Endothelial cell of umbilical vein (primary cell): ENCODE measurements at regions of chr16 and their contacts with region 1.

Region 1: DNA sequence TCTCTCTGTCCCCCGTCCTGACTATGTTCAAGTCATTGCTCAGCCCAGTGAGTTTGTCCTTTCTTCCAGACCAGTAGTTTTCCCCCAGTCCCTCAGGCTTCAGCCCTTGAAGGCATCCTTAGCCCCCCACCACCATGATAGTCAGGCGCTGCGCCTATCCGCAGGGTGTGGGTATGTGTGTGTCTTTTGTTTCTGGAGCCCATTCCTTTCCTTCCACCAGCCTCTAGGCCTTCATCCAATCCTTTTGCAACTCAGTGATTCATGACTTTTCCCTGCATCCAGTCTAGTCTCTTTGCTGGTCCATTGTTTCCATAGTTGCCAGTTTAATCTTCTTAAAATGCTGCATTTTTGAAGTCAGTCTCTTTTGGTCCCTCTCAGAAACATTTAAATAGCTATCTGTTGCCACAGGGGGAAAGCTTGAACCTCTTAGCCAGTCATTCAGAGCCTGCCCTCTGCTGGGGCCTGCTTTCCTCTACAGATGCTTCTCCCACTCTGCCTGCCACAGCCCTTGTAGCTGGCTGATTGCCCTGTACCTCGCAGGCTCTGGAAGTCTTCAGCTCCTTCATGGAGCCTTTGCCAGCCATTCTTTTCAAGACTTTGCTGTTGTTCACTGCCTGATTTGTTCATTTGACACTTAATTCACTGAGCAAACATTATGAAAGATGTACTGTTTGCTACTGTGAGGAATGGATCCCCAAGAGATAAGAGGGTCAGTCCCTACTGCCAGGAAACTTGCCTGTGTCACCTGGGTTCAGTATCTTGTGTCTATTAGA is 55.9 kb upstream of the ADCY7 start:
- DNase-seq: peak; percentile 86
- H3K4me3 ChIP-seq: no peak overlapping the region
- H3K27ac ChIP-seq: no peak overlapping the region
- H3K4me1 ChIP-seq: peaks cover 22% of the 10 kb centered on the region
- H3K27me3 ChIP-seq: no peaks in the 10 kb centered on the region
- CTCF ChIP-seq: peak; percentile 71 to 80
- POLR2A ChIP-seq: no peak

Region 2: GRCh38 chr16:50024684-50025536 is 185.5 kb before region 1 on chr16 and contains the start of gene CNEP1R1:
- CTCF ChIA-PET with region 1: interaction called, 132 read pairs
- POLR2A ChIA-PET with region 1: interaction called, 3 read pairs
- dilution Hi-C with region 1: no loop called
- intact Hi-C with region 1: loop called (anchors 1 kb)
- DNase-seq: peak; percentile 98
- H3K4me3 ChIP-seq: peak within 1 kb of the TSS; percentile 86 to 94 (median 93)
- H3K27ac ChIP-seq: peak within 1 kb of the TSS; percentile 8
- H3K4me1 ChIP-seq: peaks cover 13% of the 10 kb centered on the region
- H3K27me3 ChIP-seq: peaks cover 2 to 6% of the 10 kb centered on the region in 2 experiments
- CTCF ChIP-seq: peak; percentile 99 to 100
- POLR2A ChIP-seq: peak; percentile 63
- total RNA-seq, gene CNEP1R1: 21.7 and 23.2 TPM in 2 replicates

Region 3: GRCh38 chr16:50079397-50080140 is 130.9 kb before region 1 on chr16:
- CTCF ChIA-PET with region 1: interaction called, 17 read pairs
- POLR2A ChIA-PET with region 1: no interaction called
- dilution Hi-C with region 1: no loop called
- intact Hi-C with region 1: no loop called
- DNase-seq: no peak
- H3K4me3 ChIP-seq: no peak overlapping the region
- H3K27ac ChIP-seq: no peak overlapping the region
- H3K4me1 ChIP-seq: peaks cover 7% of the 10 kb centered on the region
- H3K27me3 ChIP-seq: no peaks in the 10 kb centered on the region
- CTCF ChIP-seq: no peak
- POLR2A ChIP-seq: no peak

Region 4: GRCh38 chr16:50152807-50153452 is 57.5 kb before region 1 on chr16 and contains the start of gene TENT4B:
- CTCF ChIA-PET with region 1: interaction called, 55 read pairs
- POLR2A ChIA-PET with region 1: interaction called, 3 read pairs
- dilution Hi-C with region 1: no loop called
- intact Hi-C with region 1: loop called (anchors 1 kb)
- DNase-seq: peak; percentile 87
- H3K4me3 ChIP-seq: peak within 1 kb of the TSS; percentile 83 to 93 (median 83)
- H3K27ac ChIP-seq: peak within 1 kb of the TSS; percentile 89
- H3K4me1 ChIP-seq: peaks cover 17% of the 10 kb centered on the region
- H3K27me3 ChIP-seq: no peaks in the 10 kb centered on the region
- CTCF ChIP-seq: no peak
- POLR2A ChIP-seq: peak; percentile 79
- total RNA-seq, gene TENT4B: 13.1 TPM in 2 replicates

Region 5: DNA sequence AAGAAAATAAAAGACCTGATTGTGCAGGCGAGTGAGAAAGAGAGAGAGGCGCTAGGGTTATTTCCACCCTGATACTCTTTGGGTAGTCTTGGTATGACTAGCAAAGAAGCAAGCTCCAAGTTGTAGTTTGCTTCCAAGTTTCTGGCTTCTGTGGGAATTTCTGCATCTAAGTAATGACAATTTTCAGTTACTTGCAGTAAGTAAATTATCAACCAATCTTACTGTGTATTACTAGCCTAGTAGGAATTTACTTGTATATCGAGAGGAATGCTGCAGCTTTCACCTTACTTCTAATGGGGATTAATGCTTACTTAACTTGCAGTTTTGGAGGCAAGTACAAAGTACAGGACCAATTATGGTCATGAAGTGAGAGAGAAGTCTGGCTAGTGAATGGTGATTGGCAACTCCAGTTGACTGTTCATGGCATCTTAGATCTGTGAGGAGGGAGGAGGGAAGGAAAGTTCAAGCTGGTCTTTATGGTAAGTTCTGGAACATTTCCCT is 25.4 kb before region 1 on chr16:
- CTCF ChIA-PET with region 1: interaction called, 32 read pairs
- POLR2A ChIA-PET with region 1: interaction called, 7 read pairs
- dilution Hi-C with region 1: no loop called
- intact Hi-C with region 1: no loop called
- DNase-seq: peak; percentile 60
- H3K4me3 ChIP-seq: no peak overlapping the region
- H3K27ac ChIP-seq: no peak overlapping the region
- H3K4me1 ChIP-seq: peaks cover 16% of the 10 kb centered on the region
- H3K27me3 ChIP-seq: no peaks in the 10 kb centered on the region
- CTCF ChIP-seq: no peak
- POLR2A ChIP-seq: no peak

Region 6: GRCh38 chr16:50509521-50510341 is 299.3 kb after region 1 on chr16:
- CTCF ChIA-PET with region 1: interaction called, 3 read pairs
- POLR2A ChIA-PET with region 1: no interaction called
- dilution Hi-C with region 1: no loop called
- intact Hi-C with region 1: loop called (anchors 1 kb)
- DNase-seq: peak; percentile 42
- H3K4me3 ChIP-seq: no peak overlapping the region
- H3K27ac ChIP-seq: no peak overlapping the region
- H3K4me1 ChIP-seq: no peaks in the 10 kb centered on the region
- H3K27me3 ChIP-seq: no peaks in the 10 kb centered on the region
- CTCF ChIP-seq: peak; percentile 66 to 69
- POLR2A ChIP-seq: no peak